Activated T-helper 2 cell treated with anti-CD3 and anti-CD28 coated beads, Interferon-gamma antibody, Interleukin-2, Interleukin-4, amounts not matched to agents 10 μg/mL and 5 μg/mL and 100 μg/mL, durations not matched to agents 14 hours and 24 hours and 36 hours (primary cell): ENCODE measurements at regions of chr1 and their contacts with region 1.

Region 1: DNA sequence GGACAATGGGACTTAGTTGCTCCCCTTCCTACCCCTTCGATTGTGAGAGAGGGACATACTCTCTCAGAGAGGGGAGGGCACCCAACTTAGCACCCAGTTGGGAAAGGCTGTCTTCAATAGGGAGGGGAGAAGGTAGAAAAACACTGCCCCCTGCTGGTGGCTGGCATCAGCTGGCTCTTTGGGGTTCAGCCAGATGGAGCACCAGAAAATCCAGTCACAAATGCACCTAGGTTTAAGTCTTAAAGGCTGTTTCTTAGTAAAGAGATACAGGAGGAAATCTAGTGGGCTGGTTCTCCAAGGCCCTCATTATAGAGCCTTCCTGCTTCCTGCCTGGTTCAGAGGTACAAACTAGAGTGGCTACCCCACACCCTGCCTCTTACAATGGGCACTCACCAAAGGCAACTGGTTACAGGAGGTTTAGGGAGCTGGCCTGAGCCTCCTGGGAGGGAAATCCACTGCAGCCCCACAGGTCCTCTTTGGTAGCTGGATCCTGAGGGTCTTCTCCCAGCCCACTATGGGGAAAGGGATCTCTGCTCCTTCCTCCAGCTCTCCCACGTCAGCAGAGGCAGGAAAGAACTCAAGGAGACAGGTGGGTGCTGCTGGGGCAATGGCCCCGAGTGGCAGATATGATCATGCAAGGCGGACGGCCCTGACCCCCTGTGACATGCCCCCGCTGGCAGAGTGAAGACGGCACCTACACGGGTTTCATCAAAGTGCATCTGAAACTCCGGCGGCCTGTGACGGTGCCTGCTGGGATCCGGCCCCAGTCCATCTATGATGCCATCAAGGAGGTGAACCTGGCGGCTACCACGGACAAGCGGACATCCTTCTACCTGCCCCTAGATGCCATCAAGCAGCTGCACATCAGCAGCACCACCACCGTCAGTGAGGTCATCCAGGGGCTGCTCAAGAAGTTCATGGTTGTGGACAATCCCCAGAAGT is 28.3 kb downstream of the EIF2D start:
- DNase-seq: peak; percentile 69
- H3K4me3 Mint-ChIP-seq: peak overlapping the region; percentile 77
- H3K27ac Mint-ChIP-seq: peak overlapping the region; percentile 98
- H3K4me1 Mint-ChIP-seq: peaks cover 81% of the 10 kb centered on the region
- H3K27me3 Mint-ChIP-seq: no peaks in the 10 kb centered on the region

Region 2: DNA sequence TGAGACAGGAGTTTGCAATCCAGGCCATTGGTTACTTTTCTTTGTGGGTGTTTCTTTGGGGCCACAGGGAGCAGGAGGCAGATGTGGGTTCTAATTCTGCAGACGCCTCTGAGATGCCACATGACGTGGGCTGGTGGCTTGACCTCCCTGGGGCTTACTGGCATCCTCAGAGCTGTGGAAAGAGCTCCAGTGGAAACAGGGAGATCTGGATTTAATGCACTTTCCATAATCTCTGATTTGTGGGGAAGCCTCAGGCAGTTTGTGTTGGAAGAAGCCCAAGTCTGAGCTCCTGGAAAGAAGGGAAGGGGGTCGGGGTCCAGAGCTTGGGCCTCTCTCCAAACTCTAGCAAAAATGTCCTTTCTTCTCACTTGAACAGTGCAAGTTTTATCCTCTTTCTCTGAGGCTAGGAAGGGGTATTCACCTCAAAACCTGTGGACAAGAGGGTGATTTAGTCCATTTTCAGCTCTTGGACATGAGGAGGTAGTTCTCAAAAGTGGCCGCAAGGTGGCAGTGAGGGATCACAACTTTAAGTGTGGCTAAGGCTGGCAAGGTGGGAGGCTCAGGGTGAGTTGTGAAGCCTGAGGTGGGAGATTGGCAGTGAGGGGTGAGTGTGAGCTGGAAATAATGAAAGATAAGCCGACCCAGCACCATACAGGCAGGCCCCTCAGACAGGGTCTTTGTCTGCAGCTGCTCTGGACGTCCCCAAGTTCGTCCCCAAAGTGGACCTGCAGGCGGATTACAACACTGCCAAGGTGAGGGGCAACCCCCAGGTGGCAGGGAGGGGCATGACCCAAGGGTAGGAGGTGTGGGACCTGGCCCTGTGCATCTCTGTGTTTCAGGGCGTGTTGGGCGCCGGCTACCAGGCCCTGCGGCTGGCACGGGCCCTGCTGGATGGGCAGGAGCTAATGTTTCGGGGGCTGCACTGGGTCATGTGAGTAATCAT is 104.5 kb before region 1 on chr1:
- intact Hi-C with region 1: loop called (anchors 5 kb)
- DNase-seq: peak; percentile 44
- H3K4me3 Mint-ChIP-seq: no peak overlapping the region
- H3K27ac Mint-ChIP-seq: peak overlapping the region; percentile 81
- H3K4me1 Mint-ChIP-seq: peaks cover 17% of the 10 kb centered on the region
- H3K27me3 Mint-ChIP-seq: no peaks in the 10 kb centered on the region

Region 3: GRCh38 chr1:206507284-206508129 is 76.5 kb before region 1 on chr1 and contains the start of gene RASSF5:
- intact Hi-C with region 1: loop called (anchors 2 kb)
- DNase-seq: peak; percentile 74
- H3K4me3 Mint-ChIP-seq: peak within 1 kb of the TSS; percentile 75
- H3K27ac Mint-ChIP-seq: no peak within 1 kb of the TSS
- H3K4me1 Mint-ChIP-seq: peaks cover 30% of the 10 kb centered on the region
- H3K27me3 Mint-ChIP-seq: peaks cover 18% of the 10 kb centered on the region
- total RNA-seq, gene RASSF5: 180 and 182 TPM in 2 replicates

Region 4: DNA sequence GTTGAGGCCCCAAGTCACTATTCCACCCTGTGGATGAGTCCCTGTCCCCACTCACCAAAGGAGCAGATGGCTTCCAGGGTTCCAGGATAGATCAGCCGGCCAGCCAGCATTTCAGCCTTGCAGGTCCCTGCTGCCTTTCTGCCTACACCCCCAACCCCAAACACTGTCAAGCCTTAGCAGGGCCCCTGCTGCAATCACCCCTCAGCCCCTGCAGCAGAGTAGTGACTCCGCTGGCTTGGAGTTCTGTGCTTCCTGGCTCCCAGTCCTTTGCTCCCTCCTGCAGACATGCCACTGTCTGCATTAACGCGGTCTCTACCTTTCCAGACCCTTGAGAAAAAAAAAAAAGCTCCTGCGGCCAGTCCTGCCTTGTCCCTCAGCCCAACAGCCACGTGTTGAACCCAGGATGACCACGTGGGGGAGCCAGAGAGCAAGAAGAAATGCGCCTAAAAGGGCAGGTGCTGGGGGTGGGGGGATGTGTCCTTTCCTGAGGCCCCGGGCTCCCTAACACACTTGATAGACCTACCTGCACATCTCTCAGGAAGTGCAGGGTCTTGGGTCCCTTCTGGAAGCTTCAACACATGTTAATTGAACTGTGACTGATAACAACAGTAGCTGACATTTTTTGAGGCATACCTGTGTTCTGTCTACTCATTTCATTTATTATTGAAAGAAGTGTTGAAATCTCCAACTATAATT is 39.3 kb before region 1 on chr1:
- intact Hi-C with region 1: loop called (anchors 1 kb)
- DNase-seq: peak; percentile 73
- H3K4me3 Mint-ChIP-seq: no peak overlapping the region
- H3K27ac Mint-ChIP-seq: no peak overlapping the region
- H3K4me1 Mint-ChIP-seq: peaks cover 18% of the 10 kb centered on the region
- H3K27me3 Mint-ChIP-seq: no peaks in the 10 kb centered on the region

Region 5: DNA sequence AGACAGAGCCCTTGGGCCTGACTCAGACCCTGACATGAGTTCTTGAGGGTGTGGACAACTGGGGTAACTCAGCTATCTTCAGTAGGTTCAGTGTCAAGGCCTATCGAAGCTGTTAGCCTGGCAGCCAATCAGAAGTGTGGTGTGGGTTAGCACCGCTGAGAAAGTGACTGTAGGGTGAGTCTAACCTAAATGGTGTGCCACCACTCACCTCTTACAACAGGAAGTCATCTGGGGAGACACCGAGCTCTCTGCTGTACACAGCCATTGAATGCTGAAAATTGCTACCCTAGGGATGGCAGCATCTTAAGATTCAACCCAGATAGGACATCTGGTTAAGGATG is 32.0 kb before region 1 on chr1:
- intact Hi-C with region 1: loop called (anchors 1 kb)
- DNase-seq: peak; percentile 71
- H3K4me3 Mint-ChIP-seq: peak overlapping the region; percentile 67
- H3K27ac Mint-ChIP-seq: peak overlapping the region; percentile 90
- H3K4me1 Mint-ChIP-seq: peaks cover 54% of the 10 kb centered on the region
- H3K27me3 Mint-ChIP-seq: no peaks in the 10 kb centered on the region

Region 6: DNA sequence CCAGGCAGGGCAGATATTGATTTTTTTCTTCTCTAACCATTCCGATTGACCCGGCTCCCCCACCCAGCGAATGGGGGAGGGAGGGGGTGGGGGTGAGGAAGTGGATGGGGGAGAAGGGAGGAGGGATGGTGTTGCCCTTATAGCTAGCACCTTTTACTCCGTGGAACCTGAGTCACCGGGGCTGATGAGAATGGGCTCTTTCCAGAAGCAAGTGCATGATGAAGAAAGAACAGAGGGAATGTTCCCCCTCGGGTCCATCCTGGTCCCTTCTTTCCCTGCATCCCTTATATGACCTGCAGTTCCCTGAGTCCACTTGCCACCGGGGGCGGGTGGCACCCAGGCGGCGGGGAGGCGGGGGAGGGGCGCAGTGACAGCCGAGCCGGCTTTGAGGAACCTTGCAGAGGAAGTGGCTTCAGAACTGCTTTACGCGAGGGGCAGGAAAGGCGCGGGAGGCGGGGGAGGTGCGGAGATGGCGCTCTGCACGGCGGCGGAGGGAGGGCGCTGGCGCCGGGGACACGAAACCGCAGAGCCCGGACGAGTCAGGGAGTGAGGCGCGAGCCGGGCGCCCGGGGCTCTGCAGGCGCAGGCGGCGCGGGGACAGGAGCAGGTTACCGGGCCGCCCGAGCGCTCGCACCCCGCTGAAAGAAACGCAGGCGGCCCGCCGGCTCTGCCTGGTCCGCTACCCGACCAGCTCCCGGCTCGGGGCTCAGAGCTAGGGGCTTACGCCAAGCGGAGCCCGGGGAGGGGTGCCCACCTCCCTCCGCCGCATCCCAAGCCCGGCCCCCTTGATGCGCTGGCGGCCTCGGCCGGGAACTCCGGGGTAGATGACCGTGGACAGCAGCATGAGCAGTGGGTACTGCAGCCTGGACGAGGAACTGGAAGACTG is 27.0 kb before region 1 on chr1:
- intact Hi-C with region 1: loop called (anchors 1 kb)
- DNase-seq: peak; percentile 89
- H3K4me3 Mint-ChIP-seq: peak overlapping the region; percentile 97
- H3K27ac Mint-ChIP-seq: peak overlapping the region; percentile 95
- H3K4me1 Mint-ChIP-seq: peaks cover 65% of the 10 kb centered on the region
- H3K27me3 Mint-ChIP-seq: no peaks in the 10 kb centered on the region

Region 7: GRCh38 chr1:206563367-206564207 is 20.4 kb before region 1 on chr1:
- intact Hi-C with region 1: loop called (anchors 1 kb)
- DNase-seq: no peak
- H3K4me3 Mint-ChIP-seq: peak overlapping the region; percentile 67
- H3K27ac Mint-ChIP-seq: peak overlapping the region; percentile 91
- H3K4me1 Mint-ChIP-seq: peaks cover 89% of the 10 kb centered on the region
- H3K27me3 Mint-ChIP-seq: no peaks in the 10 kb centered on the region